ENCODE measurements at regions of chr5 and their contacts with region 1.

Region 1: GRCh38 chr5:139287890-139288635 is 5.5 kb upstream of the MATR3 start:
- DNase-seq: peak in 2 of 9 experiments; percentile 44 to 56
- ATAC-seq: peak; percentile 56
- H3K4me3 ChIP-seq: no peak overlapping the region
- H3K4me3 Mint-ChIP-seq: no peak overlapping the region
- H3K27ac ChIP-seq: no peak overlapping the region
- H3K27ac Mint-ChIP-seq: no peak overlapping the region
- H3K4me1 ChIP-seq: peaks cover 3% of the 10 kb centered on the region
- H3K4me1 Mint-ChIP-seq: peaks cover 2% of the 10 kb centered on the region
- H3K27me3 ChIP-seq: no peaks in the 10 kb centered on the region
- H3K27me3 Mint-ChIP-seq: no peaks in the 10 kb centered on the region
- CTCF ChIP-seq: no peak

Region 2: DNA sequence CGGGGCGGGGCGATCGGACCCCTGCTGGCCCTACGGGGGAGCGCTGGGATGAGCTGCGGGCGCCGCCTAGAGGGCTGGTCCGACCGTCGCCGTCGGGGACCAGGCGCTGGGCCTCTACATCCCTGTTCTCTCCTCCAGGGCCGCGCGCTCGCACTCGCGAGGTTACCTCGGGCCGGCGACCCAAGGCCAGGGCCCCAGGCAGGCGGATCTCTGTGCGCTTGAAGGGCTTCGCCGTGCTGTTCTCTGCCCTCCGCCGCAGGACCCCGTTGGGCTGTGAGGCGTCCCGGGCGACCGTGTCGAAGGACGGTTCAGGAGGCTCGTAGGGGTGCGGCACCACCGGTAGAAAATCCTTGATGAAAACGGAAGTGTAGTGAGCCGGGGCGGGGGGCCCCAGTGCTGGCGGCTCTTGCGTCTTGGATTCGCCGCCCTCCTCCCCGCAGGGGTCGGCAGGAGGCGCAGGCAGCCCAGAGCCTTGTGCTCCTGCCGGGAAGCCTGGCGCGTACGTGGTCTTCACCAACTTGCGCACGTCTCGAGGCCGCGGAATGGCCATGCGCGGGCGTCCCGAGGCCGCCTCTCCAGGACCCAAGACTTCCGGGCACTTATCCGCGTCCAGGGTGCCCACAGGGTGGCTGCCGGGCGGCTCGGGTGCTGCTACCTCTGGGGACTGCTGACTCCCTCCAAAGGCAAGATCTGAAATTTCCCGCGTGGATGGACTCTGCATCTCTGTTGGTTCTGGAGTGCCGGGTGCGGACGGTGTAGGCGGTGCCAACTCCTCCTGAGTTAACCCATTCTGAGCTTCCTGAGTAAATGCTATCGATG is 104.8 kb after region 1 on chr5:
- CTCF ChIA-PET with region 1: interaction called, 4 read pairs
- POLR2A ChIA-PET with region 1: no interaction called
- intact Hi-C with region 1: loop called (anchors 1 to 5 kb)
- DNase-seq: peak; percentile 48 to 88 (median 75)
- ATAC-seq: peak; percentile 62
- H3K4me3 ChIP-seq: peak overlapping the region; percentile 72 to 84
- H3K4me3 Mint-ChIP-seq: peak overlapping the region; percentile 90
- H3K27ac ChIP-seq: peak overlapping the region in 1 of 2 experiments; percentile 29
- H3K27ac Mint-ChIP-seq: peak overlapping the region; percentile 60
- H3K4me1 ChIP-seq: peaks cover 44% of the 10 kb centered on the region
- H3K4me1 Mint-ChIP-seq: peaks cover 42% of the 10 kb centered on the region
- H3K27me3 ChIP-seq: no peaks in the 10 kb centered on the region
- H3K27me3 Mint-ChIP-seq: no peaks in the 10 kb centered on the region
- CTCF ChIP-seq: peak; percentile 62